IMR-90 (cell line): ENCODE measurements at regions of chr7 and their contacts with region 1.

Region 1: GRCh38 chr7:100342765-100343164 is 15.2 kb upstream of the PILRB start:
- DNase-seq: no peak
- ATAC-seq: no peak
- H3K4me3 ChIP-seq: no peak overlapping the region
- H3K27ac ChIP-seq: no peak overlapping the region
- H3K4me1 ChIP-seq: peaks cover 4% of the 10 kb centered on the region
- H3K27me3 ChIP-seq: no peaks in the 10 kb centered on the region
- CTCF ChIP-seq: no peak
- POLR2A ChIP-seq: no peak
- RAD21 ChIP-seq: no peak

Region 2: DNA sequence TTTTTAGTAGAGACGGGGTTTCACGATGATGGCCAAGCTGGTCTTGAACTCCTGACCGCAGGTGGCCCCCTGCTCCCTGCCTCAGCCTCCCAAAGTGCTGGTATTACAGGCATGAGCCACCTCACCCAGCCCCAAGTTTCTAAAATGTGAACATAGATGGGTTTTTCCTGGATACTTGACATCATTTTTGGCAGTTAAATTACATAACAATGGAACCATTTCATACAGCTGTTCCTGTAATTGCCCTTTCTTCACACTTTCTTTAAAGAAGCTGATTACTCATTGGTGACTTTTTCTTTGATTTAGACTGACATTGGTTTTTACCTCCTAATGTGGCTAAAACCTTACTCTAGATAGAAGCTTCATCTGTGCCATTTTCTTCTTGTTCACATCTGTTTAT is 321.5 kb before region 1 on chr7:
- CTCF ChIA-PET with region 1: no interaction called
- POLR2A ChIA-PET with region 1: interaction called, 10 read pairs
- dilution Hi-C with region 1: no loop called
- in situ Hi-C with region 1: no loop called
- intact Hi-C with region 1: no loop called
- DNase-seq: no peak
- ATAC-seq: no peak
- H3K4me3 ChIP-seq: no peak overlapping the region
- H3K27ac ChIP-seq: no peak overlapping the region
- H3K4me1 ChIP-seq: peaks cover 2% of the 10 kb centered on the region; the same call in 1 of the 2 replicates
- H3K27me3 ChIP-seq: no peaks in the 10 kb centered on the region
- CTCF ChIP-seq: no peak
- POLR2A ChIP-seq: no peak
- RAD21 ChIP-seq: no peak

Region 3: GRCh38 chr7:100428967-100429636 is 86.3 kb after region 1 on chr7:
- CTCF ChIA-PET with region 1: no interaction called
- POLR2A ChIA-PET with region 1: interaction called, 13 read pairs
- dilution Hi-C with region 1: no loop called
- in situ Hi-C with region 1: no loop called
- intact Hi-C with region 1: no loop called
- DNase-seq: peak; percentile 99
- ATAC-seq: peak; percentile 74
- H3K4me3 ChIP-seq: peak overlapping the region; percentile 64
- H3K27ac ChIP-seq: peak overlapping the region; percentile 97
- H3K4me1 ChIP-seq: peaks cover 7% of the 10 kb centered on the region; the same call in 1 of the 2 replicates
- H3K27me3 ChIP-seq: no peaks in the 10 kb centered on the region
- CTCF ChIP-seq: no peak
- POLR2A ChIP-seq: peak; percentile 88
- RAD21 ChIP-seq: no peak